ENCODE measurements at regions of chr17 and their contacts with region 1.

Region 1: GRCh38 chr17:7977039-7977438 is 25.4 kb upstream of the GUCY2D start:
- DNase-seq: no peak
- ATAC-seq: no peak
- H3K4me3 ChIP-seq: no peak overlapping the region
- H3K4me3 Mint-ChIP-seq: no peak overlapping the region
- H3K27ac ChIP-seq: no peak overlapping the region
- H3K27ac Mint-ChIP-seq: no peak overlapping the region
- H3K4me1 ChIP-seq: no peaks in the 10 kb centered on the region
- H3K4me1 Mint-ChIP-seq: no peaks in the 10 kb centered on the region
- H3K27me3 ChIP-seq: no peaks in the 10 kb centered on the region
- H3K27me3 Mint-ChIP-seq: peaks cover 6% of the 10 kb centered on the region
- CTCF ChIP-seq: no peak

Region 2: DNA sequence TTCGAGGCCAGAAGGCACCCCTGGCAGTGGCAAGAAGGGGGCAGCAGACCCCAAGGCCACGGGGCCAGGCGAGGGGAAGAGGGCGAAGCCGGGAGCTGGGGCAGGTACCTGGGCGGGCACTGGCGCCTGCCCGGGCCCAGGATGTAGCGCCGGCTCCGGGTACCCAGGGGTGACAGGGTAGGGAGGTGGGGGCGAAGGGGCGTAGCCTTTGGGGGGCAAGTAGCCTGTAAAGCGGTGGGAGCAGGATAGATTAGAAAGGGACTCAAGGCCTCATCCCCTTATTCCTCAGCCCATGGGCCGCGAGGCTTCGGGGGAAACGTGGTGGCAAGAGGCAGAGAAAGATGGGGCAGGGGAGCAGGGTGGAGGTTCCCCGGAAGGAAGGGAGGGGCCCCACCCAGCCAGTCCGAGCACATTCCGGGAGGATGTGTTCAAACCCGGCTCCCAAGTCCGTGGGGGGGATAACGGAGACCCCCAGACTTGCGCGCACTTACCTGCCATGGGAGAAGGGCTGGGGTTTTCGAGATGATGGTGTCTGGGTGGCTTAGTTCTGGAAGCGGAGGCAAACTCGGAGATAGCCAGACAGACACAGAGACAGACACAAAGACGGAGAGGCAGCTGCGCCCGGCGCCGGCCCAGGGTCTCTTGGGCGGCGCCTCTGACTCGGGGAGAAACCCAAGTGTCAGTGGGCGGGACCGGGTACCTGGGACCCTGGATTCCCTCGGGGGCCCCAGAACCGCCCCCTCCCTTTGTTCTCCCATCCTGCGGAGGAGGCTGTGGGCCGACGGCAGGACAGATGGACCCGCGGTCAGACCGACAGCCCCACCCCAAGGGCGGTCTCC is 583.2 kb before region 1 on chr17:
- CTCF ChIA-PET with region 1: no interaction called
- POLR2A ChIA-PET with region 1: no interaction called
- intact Hi-C with region 1: no loop called
- DNase-seq: peak in 7 of 9 experiments; percentile 44 to 89 (median 72)
- ATAC-seq: peak; percentile 70
- H3K4me3 ChIP-seq: peak overlapping the region; percentile 81 to 84
- H3K4me3 Mint-ChIP-seq: peak overlapping the region; percentile 92
- H3K27ac ChIP-seq: peak overlapping the region; percentile 68 to 72
- H3K27ac Mint-ChIP-seq: peak overlapping the region; percentile 92
- H3K4me1 ChIP-seq: peaks cover 33% of the 10 kb centered on the region
- H3K4me1 Mint-ChIP-seq: peaks cover 26% of the 10 kb centered on the region
- H3K27me3 ChIP-seq: no peaks in the 10 kb centered on the region
- H3K27me3 Mint-ChIP-seq: no peaks in the 10 kb centered on the region
- CTCF ChIP-seq: no peak

Region 3: DNA sequence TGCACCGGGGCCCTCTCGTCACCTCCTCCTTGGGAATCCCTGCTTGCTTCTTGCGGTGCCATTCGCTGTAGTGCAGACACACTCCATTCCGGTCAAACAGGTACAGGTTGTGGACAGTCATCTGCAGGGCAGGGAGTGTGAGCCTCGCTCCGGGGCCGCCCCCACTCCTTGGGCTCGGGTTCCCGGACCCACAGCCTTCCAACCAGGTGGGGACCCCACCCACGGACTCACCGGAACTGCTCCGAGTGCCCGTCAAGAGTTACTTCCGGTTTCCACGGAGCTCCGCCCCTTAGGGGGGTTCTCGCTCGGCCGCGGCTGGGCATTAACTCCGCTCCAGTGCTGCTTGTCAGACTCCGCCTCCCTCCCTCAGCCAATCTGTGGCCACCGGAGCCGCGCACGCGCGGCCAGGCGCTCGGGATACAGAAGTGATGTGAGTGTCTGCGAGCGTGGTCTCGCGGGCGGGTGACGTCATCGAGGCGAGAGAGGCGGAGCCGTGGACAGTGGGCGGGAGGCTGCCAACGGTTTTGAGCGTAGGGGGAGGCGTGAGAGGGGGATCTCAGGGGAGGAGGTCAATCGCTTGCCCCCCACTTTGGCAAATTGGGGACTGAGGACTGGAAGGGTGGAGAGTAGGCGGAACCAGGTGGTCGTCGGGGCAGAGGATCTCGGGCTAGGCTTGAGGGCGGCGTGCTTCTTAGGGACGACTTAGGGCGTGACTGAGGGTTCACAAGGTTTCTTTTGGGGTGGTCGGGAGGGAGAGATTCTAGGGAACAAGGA is 45.1 kb before region 1 on chr17 and contains the starts of genes CNTROB and TRAPPC1:
- CTCF ChIA-PET with region 1: no interaction called
- POLR2A ChIA-PET with region 1: no interaction called
- intact Hi-C with region 1: no loop called
- DNase-seq: peak; percentile 99 to 100 (median 99)
- ATAC-seq: peak; percentile 93
- H3K4me3 ChIP-seq: peak within 1 kb of the TSS; percentile 96
- H3K4me3 Mint-ChIP-seq: peak within 1 kb of the TSS; percentile 100
- H3K27ac ChIP-seq: peak within 1 kb of the TSS; percentile 85
- H3K27ac Mint-ChIP-seq: peak within 1 kb of the TSS; percentile 99
- H3K4me1 ChIP-seq: peaks cover 22% of the 10 kb centered on the region
- H3K4me1 Mint-ChIP-seq: peaks cover 50% of the 10 kb centered on the region
- H3K27me3 ChIP-seq: no peaks in the 10 kb centered on the region
- H3K27me3 Mint-ChIP-seq: no peaks in the 10 kb centered on the region
- CTCF ChIP-seq: no peak
- total RNA-seq, gene CNTROB: 20.1 to 23.6 TPM
- total RNA-seq, gene TRAPPC1: 29.6 to 39.4 TPM

Region 4: DNA sequence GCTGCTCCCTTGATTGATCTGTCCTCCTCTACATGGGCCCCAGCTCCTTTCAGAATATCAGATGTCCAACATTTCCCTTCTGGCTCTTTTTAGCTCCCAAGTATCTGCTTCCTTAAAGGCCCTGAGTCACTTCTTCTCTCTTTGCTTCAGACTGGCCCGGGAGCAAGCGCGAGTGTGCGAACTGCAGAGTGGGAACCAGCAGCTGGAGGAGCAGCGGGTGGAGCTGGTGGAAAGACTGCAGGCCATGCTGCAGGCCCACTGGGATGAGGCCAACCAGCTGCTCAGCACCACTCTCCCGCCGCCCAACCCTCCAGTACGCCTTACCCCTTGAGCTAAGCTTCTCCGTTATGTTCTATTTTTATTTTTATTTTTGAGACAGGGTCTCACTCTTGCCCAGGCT is 32.7 kb before region 1 on chr17:
- CTCF ChIA-PET with region 1: interaction called, 3 read pairs
- POLR2A ChIA-PET with region 1: no interaction called
- intact Hi-C with region 1: loop called in 1 of 2 experiments (anchors 5 kb)
- DNase-seq: no peak
- ATAC-seq: no peak
- H3K4me3 ChIP-seq: no peak overlapping the region
- H3K4me3 Mint-ChIP-seq: no peak overlapping the region
- H3K27ac ChIP-seq: no peak overlapping the region
- H3K27ac Mint-ChIP-seq: no peak overlapping the region
- H3K4me1 ChIP-seq: no peaks in the 10 kb centered on the region
- H3K4me1 Mint-ChIP-seq: no peaks in the 10 kb centered on the region
- H3K27me3 ChIP-seq: no peaks in the 10 kb centered on the region
- H3K27me3 Mint-ChIP-seq: no peaks in the 10 kb centered on the region
- CTCF ChIP-seq: no peak

Region 5: DNA sequence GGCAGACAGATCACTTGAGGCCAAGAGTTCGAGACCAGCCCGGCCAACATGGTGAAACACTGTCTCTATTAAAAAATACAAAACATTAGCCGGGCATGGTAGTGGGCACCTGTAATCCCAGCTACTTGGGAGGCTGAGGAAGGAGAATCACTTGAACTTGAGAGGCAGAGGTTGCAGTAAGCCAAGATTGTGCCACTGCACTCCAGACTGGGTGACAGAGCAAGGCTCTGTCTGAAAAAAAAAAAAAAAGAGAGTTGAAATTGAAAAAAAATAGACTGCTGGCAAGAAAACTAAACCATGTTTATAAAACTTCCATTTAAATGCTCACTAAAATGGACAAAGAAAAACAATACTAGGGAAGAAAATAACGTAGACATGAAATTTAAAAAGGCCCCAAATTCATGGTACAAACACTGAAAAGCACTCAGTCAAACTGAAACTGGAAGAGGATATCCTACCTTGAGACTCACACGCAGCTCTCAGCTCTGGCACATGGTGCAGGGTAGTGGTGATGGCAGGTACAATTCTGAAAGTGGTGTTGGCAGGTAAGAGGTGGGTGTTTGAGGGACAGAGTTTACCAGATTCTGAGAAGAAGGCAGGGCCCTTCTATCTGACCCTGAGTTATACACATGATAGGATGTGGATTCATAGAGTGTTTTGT is 25.8 kb before region 1 on chr17:
- CTCF ChIA-PET with region 1: no interaction called
- POLR2A ChIA-PET with region 1: no interaction called
- intact Hi-C with region 1: loop called in 1 of 2 experiments (anchors 2 kb)
- DNase-seq: no peak
- ATAC-seq: no peak
- H3K4me3 ChIP-seq: no peak overlapping the region
- H3K4me3 Mint-ChIP-seq: no peak overlapping the region
- H3K27ac ChIP-seq: no peak overlapping the region
- H3K27ac Mint-ChIP-seq: peak overlapping the region; percentile 34
- H3K4me1 ChIP-seq: no peaks in the 10 kb centered on the region
- H3K4me1 Mint-ChIP-seq: peaks cover 5% of the 10 kb centered on the region
- H3K27me3 ChIP-seq: no peaks in the 10 kb centered on the region
- H3K27me3 Mint-ChIP-seq: no peaks in the 10 kb centered on the region
- CTCF ChIP-seq: no peak

Region 6: GRCh38 chr17:8016632-8017478 is 39.8 kb after region 1 on chr17:
- CTCF ChIA-PET with region 1: no interaction called
- POLR2A ChIA-PET with region 1: no interaction called
- intact Hi-C with region 1: no loop called
- DNase-seq: peak in 7 of 9 experiments; percentile 15 to 57 (median 36)
- ATAC-seq: peak; percentile 89
- H3K4me3 ChIP-seq: peak overlapping the region; percentile 39 to 55
- H3K4me3 Mint-ChIP-seq: peak overlapping the region; percentile 81
- H3K27ac ChIP-seq: no peak overlapping the region
- H3K27ac Mint-ChIP-seq: no peak overlapping the region
- H3K4me1 ChIP-seq: peaks cover 8% of the 10 kb centered on the region
- H3K4me1 Mint-ChIP-seq: peaks cover 12% of the 10 kb centered on the region
- H3K27me3 ChIP-seq: peaks cover 0 to 15% of the 10 kb centered on the region in 2 experiments
- H3K27me3 Mint-ChIP-seq: peaks cover 13% of the 10 kb centered on the region
- CTCF ChIP-seq: peak; percentile 63